PC-9 (cell line): ENCODE measurements at regions of chr12 and their contacts with region 1.

Region 1: DNA sequence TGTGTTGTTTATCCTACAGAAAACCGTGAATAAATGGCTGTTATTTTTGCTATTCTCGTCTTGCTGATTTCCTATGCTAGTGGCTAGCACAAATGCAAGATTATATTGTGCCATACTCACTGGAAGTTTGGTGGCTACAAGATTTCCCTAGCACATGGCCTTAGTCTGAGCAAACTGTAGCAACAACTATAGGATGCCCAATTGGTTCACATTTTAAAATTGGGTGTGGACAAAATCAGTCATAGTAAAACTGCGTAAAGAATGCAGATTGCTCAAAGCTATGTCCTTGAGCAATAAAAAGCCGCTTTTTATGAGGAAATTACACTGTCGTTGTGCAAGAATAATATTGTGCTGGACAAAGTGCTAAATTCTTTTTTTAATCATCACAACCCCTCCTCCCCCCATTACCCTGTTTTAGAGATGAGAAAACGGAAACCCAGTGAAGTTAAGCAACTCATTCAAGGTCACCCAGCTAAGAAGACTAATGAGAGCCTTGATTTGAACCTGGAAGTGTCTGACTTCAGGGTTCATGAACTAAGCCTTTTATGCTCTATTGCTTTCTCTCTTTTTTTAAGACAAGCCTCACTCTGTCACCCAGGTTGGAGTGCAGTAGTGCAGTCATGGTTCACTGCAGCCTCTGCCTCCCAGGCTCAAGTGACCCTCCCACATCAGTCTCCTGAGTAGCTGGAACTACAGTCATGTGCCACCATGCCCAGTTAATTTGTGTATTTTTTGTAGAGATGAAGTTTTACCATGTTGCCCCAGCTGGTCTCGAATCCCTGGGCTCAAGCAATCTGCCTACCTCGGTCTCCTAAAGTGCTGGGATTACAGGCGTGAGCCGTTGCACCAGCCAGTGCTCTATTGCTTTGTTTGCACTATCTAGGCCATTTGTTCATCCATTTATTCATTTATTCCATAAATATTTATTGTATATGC is 73.6 kb downstream of the SRGAP1 start:
- DNase-seq: peak; percentile 50 to 99
- H3K4me3 ChIP-seq: peak overlapping the region; percentile 20
- H3K27ac ChIP-seq: peak overlapping the region; percentile 97
- H3K4me1 ChIP-seq: peaks cover 92% of the 10 kb centered on the region
- H3K27me3 ChIP-seq: no peaks in the 10 kb centered on the region
- CTCF ChIP-seq: no peak

Region 2: DNA sequence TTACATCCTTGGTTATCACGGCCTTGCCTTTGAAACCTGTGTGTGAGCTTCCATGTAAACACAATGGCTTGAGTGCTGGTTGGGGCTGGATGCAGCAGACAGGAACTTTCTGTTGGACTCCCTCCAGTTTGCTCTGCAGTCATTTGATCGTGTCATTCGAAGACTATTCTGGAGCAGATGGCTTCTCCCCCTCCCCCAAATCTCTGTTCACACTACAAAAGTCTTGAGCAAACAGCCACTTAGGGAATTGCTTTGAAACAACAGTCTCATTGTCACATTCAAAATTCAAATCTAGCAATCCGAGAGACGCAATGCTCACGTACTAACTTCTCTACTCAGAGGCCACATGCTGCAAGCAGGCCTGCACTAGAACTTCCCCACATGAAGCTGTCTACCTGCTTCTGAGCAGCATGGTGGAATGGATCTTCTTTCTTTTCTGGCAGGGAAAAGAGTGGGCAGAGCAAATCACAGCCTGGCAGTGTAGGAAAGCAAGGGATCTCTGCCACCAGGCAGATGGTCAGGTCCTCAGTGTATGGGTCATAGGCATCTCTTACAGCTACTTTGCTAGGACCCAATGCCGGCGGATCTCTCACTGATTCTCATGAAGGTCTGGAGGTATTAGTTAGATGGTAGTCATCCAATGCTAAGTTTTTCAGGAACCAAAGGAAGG is 1197.3 kb before region 1 on chr12:
- CTCF ChIA-PET with region 1: no interaction called
- POLR2A ChIA-PET with region 1: no interaction called
- intact Hi-C with region 1: no loop called
- DNase-seq: no peak
- H3K4me3 ChIP-seq: no peak overlapping the region
- H3K27ac ChIP-seq: no peak overlapping the region
- H3K4me1 ChIP-seq: peaks cover 69% of the 10 kb centered on the region
- H3K27me3 ChIP-seq: no peaks in the 10 kb centered on the region
- CTCF ChIP-seq: no peak

Region 3: GRCh38 chr12:63862214-63863107 is 55.7 kb before region 1 on chr12:
- CTCF ChIA-PET with region 1: interaction called, 8 read pairs
- POLR2A ChIA-PET with region 1: no interaction called
- intact Hi-C with region 1: loop called (anchors 1 kb)
- DNase-seq: peak; percentile 78 to 96
- H3K4me3 ChIP-seq: peak overlapping the region; percentile 23; the same call in 1 of the 2 replicates
- H3K27ac ChIP-seq: peak overlapping the region; percentile 76
- H3K4me1 ChIP-seq: peaks cover 64% of the 10 kb centered on the region
- H3K27me3 ChIP-seq: no peaks in the 10 kb centered on the region
- CTCF ChIP-seq: no peak

Region 4: DNA sequence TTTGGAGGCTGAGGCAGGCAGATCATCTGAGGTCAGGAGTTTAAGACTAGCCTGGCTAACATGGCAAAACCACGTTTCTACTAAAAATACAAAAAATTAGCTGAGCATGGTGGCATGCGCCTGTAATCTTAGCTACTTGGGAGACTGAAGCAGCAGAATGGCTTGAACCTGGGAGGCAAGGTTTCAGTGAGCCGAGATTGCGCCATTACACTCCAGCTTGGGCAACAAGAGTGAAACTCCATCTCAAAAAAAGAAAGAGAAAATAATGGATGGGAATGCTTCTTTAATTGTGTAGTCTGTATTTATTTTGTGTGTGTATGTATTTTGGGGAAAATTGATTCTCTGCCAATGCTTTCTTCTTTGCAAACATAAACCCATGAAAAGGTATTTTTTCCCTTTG is 41.2 kb before region 1 on chr12:
- CTCF ChIA-PET with region 1: no interaction called
- POLR2A ChIA-PET with region 1: interaction called, 6 read pairs
- intact Hi-C with region 1: loop called (anchors 1 kb)
- DNase-seq: no peak
- H3K4me3 ChIP-seq: no peak overlapping the region
- H3K27ac ChIP-seq: peak overlapping the region; percentile 76
- H3K4me1 ChIP-seq: peaks cover 39% of the 10 kb centered on the region
- H3K27me3 ChIP-seq: no peaks in the 10 kb centered on the region
- CTCF ChIP-seq: no peak

Region 5: GRCh38 chr12:63967358-63968145 is 49.4 kb after region 1 on chr12:
- CTCF ChIA-PET with region 1: no interaction called
- POLR2A ChIA-PET with region 1: no interaction called
- intact Hi-C with region 1: no loop called
- DNase-seq: no peak
- H3K4me3 ChIP-seq: no peak overlapping the region
- H3K27ac ChIP-seq: peak overlapping the region; percentile 4; the same call in 1 of the 2 replicates
- H3K4me1 ChIP-seq: no peaks in the 10 kb centered on the region
- H3K27me3 ChIP-seq: no peaks in the 10 kb centered on the region
- CTCF ChIP-seq: no peak

Region 6: DNA sequence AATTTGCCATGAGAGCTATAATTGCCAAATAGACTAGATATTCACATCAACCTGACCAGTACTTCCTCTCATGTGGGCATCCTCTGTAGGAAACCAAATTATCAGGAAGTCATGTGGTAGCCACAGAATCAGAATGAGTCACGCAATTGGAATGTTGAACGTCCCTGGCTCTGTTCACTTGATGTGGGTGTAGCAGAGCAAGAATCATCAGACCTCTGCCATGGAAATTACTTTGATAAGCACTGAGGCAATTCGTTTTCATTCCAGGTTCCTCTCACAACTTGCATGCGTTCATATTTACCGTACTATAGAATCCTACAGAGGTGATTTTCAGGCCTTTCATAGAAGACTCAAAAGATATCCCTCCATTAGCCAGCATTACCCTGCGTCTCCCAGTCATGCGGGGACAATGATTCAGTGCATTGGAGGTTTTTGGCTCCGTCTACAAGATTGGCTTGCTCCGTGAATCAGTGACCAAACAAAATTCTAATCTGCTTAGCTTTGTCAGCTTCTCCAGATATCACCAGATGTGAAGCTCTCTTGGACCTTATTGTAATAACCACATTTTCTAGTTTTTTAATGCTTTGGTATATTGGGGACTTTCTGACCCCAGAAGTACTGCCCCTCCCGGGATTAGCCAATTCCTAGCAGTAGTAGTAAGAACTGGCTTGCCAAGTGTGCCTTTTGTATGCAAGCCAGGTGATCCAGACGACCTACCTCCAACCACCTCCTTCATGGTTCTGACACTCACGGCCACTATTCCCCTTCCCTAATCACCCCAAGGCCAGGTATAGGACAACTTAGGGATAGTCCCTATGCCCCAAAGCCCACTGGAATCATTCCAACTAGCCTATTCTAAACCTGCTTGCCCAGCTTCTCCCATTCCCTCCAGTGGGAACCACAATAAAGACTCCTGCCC is 170.6 kb after region 1 on chr12:
- CTCF ChIA-PET with region 1: no interaction called
- POLR2A ChIA-PET with region 1: no interaction called
- intact Hi-C with region 1: loop called (anchors 2 kb)
- DNase-seq: peak; percentile 71 to 94
- H3K4me3 ChIP-seq: peak overlapping the region; percentile 48; the same call in 1 of the 2 replicates
- H3K27ac ChIP-seq: peak overlapping the region; percentile 89
- H3K4me1 ChIP-seq: peaks cover 40% of the 10 kb centered on the region
- H3K27me3 ChIP-seq: no peaks in the 10 kb centered on the region
- CTCF ChIP-seq: no peak

Region 7: GRCh38 chr12:64181504-64182291 is 263.6 kb after region 1 on chr12:
- CTCF ChIA-PET with region 1: no interaction called
- POLR2A ChIA-PET with region 1: interaction called, 3 read pairs
- intact Hi-C with region 1: loop called (anchors 10 kb)
- DNase-seq: peak; percentile 58 to 96
- H3K4me3 ChIP-seq: peak overlapping the region; percentile 3; the same call in 1 of the 2 replicates
- H3K27ac ChIP-seq: peak overlapping the region; percentile 79
- H3K4me1 ChIP-seq: peaks cover 50% of the 10 kb centered on the region
- H3K27me3 ChIP-seq: no peaks in the 10 kb centered on the region
- CTCF ChIP-seq: peak; percentile 51; the same call in 1 of the 2 replicates

Region 8: DNA sequence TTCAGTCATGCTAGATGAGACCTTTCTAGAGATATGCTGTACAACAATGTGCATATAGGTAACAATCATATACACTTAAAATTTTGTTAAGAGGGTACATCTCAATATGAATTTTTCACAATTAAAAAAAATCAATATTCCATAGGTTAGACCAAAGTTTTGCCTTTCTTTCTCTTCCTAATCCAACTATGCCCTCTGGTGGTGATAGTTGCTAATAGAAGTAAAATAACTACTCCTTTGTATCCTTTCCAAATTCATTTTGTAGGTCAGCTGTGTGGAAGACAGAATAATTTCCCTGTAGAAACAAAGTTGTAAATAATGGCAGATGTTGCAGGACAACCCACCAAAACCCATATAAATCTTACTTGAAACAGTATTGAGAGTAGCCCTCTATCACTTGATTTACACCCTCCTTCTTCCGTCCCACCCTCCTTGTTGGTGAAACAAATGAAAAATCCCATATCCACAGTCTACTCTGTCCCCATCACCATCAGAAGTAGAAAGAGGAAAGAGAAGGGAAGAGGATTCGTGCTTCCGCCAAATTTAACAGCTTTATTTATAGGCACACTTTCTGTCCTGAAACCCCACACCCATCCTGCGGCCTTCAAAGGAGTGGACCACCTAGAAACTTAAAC is 338.2 kb after region 1 on chr12:
- CTCF ChIA-PET with region 1: no interaction called
- POLR2A ChIA-PET with region 1: no interaction called
- intact Hi-C with region 1: loop called (anchors 10 kb)
- DNase-seq: no peak
- H3K4me3 ChIP-seq: no peak overlapping the region
- H3K27ac ChIP-seq: no peak overlapping the region
- H3K4me1 ChIP-seq: no peaks in the 10 kb centered on the region
- H3K27me3 ChIP-seq: no peaks in the 10 kb centered on the region
- CTCF ChIP-seq: peak; percentile 88

Region 9: GRCh38 chr12:64650762-64651161 is 732.6 kb after region 1 on chr12:
- CTCF ChIA-PET with region 1: no interaction called
- POLR2A ChIA-PET with region 1: no interaction called
- intact Hi-C with region 1: no loop called
- DNase-seq: peak in 1 of 2 experiments; percentile 42
- H3K4me3 ChIP-seq: no peak overlapping the region
- H3K27ac ChIP-seq: peak overlapping the region; percentile 11; the same call in 1 of the 2 replicates
- H3K4me1 ChIP-seq: peaks cover 25% of the 10 kb centered on the region
- H3K27me3 ChIP-seq: no peaks in the 10 kb centered on the region
- CTCF ChIP-seq: no peak

Region 10: DNA sequence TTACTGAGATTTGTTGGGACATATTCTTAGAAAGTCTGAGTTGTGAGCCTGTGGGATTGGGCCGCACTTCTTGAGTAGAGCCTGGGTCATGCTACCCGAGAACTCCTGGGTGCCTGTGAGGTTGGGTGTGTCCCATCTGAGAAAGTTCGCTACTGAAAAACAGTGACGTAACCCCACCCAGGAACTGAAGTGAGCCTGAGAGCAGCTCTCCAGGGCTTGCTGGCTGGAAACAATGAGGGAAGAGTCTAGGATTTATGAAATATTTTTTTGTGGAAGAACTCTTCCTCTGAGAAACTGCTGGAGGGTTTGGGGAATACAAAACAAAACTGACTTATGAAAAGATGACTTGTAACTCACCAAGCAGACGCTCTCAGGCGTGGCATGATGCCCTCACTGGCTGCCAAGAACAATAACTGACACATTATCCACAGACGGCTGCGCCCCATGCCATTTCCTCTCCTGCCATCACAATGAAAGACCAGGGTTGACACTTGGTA is 761.4 kb after region 1 on chr12:
- CTCF ChIA-PET with region 1: no interaction called
- POLR2A ChIA-PET with region 1: no interaction called
- intact Hi-C with region 1: loop called (anchors 10 kb)
- DNase-seq: peak; percentile 68 to 83
- H3K4me3 ChIP-seq: peak overlapping the region; percentile 45; the same call in 1 of the 2 replicates
- H3K27ac ChIP-seq: peak overlapping the region; percentile 91
- H3K4me1 ChIP-seq: peaks cover 59% of the 10 kb centered on the region
- H3K27me3 ChIP-seq: no peaks in the 10 kb centered on the region
- CTCF ChIP-seq: no peak